ENCODE measurements at regions of chr14 and their contacts with region 1.

Region 1: GRCh38 chr14:89027097-89027740 is 202.8 kb downstream of the TTC8 start:
- DNase-seq: peak; percentile 88
- CTCF ChIP-seq: peak; percentile 85

Region 2: GRCh38 chr14:89013084-89013504 is 14.1 kb before region 1 on chr14:
- CTCF ChIA-PET with region 1: interaction called, 11 read pairs
- POLR2A ChIA-PET with region 1: no interaction called
- DNase-seq: no peak
- CTCF ChIP-seq: no peak

Region 3: GRCh38 chr14:89429192-89430181 is 402.3 kb after region 1 on chr14:
- CTCF ChIA-PET with region 1: no interaction called
- POLR2A ChIA-PET with region 1: no interaction called
- DNase-seq: peak; percentile 32
- CTCF ChIP-seq: no peak

Region 4: DNA sequence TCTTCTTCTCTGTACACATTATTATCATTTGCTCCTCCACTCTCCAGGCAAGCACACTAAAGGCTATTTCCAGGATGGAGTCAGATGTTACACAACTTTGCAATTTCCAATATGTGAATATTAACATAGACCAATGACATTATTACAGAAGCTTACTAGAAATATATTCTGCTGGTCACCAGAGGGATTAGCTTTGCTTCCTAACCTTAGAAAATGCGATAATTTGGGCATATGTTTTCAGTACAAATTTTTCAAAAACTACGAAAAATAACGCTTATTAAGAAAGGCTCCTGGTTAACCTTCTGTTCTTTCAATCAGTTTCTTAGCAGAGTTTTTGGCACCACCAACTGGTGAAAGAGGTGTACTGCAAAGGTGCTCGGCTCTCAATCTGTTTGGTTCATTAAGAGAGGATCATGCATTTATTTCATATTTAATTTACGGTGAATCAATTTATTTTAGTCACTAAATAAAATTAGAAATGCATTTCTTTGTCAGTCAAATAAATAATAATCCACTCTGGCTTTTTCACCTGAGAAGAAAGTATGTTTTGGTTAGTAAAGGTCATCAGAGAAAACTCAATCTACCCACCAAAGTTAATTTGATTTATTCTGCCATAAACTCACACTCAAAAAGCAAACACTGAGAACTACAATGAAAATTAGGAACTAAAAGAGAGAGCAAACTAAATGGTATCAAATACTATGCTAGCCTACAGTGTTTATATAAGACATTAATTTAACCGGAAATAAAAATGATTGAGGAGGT is 888.1 kb after region 1 on chr14:
- CTCF ChIA-PET with region 1: interaction called, 42 read pairs
- POLR2A ChIA-PET with region 1: no interaction called
- DNase-seq: peak; percentile 64
- CTCF ChIP-seq: peak; percentile 92

Measured in GM10248 (cell line).